A549 (cell line): ENCODE measurements at regions of chr11 and their contacts with region 1.

Region 1: GRCh38 chr11:13210424-13210823 is 67.2 kb upstream of the BMAL1 start:
- DNase-seq: peak; percentile 72 to 88
- ATAC-seq: peak; percentile 85 to 90
- H3K4me3 ChIP-seq: no peak overlapping the region
- H3K27ac ChIP-seq: peak overlapping the region; percentile 6 to 64; a peak in 3 of 6 replicates
- H3K4me1 ChIP-seq: peaks cover 35% of the 10 kb centered on the region
- CTCF ChIP-seq: peak; percentile 95
- EP300 ChIP-seq: no peak
- POLR2A ChIP-seq: no peak
- RAD21 ChIP-seq: peak; percentile 99

Region 2: GRCh38 chr11:13183094-13183825 is 27.2 kb before region 1 on chr11:
- CTCF ChIA-PET with region 1: interaction called, 23 read pairs
- POLR2A ChIA-PET with region 1: no interaction called
- DNase-seq: peak; percentile 48 to 53
- ATAC-seq: peak; percentile 85 to 92
- H3K4me3 ChIP-seq: peak overlapping the region; percentile 42
- H3K27ac ChIP-seq: peak overlapping the region; percentile 54 to 69; a peak in 5 of 6 replicates
- H3K4me1 ChIP-seq: peaks cover 6% of the 10 kb centered on the region
- CTCF ChIP-seq: peak; percentile 60
- EP300 ChIP-seq: no peak
- POLR2A ChIP-seq: no peak
- RAD21 ChIP-seq: peak; percentile 76 to 80

Region 3: GRCh38 chr11:13238879-13239514 is 28.6 kb after region 1 on chr11:
- CTCF ChIA-PET with region 1: interaction called, 77 read pairs
- POLR2A ChIA-PET with region 1: no interaction called
- DNase-seq: peak; percentile 55 to 57
- ATAC-seq: peak; percentile 59 to 95; a peak in 4 of 6 replicates
- H3K4me3 ChIP-seq: no peak overlapping the region
- H3K27ac ChIP-seq: peak overlapping the region in 1 of 2 experiments; percentile 14; a peak in 3 of 6 replicates
- H3K4me1 ChIP-seq: 0 out of 3 replicates have a peak, but pooled peaks cover 2% of the 10 kb centered on the region
- CTCF ChIP-seq: peak; percentile 77
- EP300 ChIP-seq: no peak
- POLR2A ChIP-seq: no peak
- RAD21 ChIP-seq: peak; percentile 71 to 78

Region 4: GRCh38 chr11:13261591-13262061 is 51.2 kb after region 1 on chr11:
- CTCF ChIA-PET with region 1: interaction called, 30 read pairs
- POLR2A ChIA-PET with region 1: interaction called, 7 read pairs
- DNase-seq: peak; percentile 69 to 84
- ATAC-seq: peak; percentile 78 to 95
- H3K4me3 ChIP-seq: no peak overlapping the region
- H3K27ac ChIP-seq: peak overlapping the region; percentile 62 to 84
- H3K4me1 ChIP-seq: peaks cover 30% of the 10 kb centered on the region
- CTCF ChIP-seq: no peak
- EP300 ChIP-seq: no peak
- POLR2A ChIP-seq: no peak
- RAD21 ChIP-seq: no peak

Region 5: DNA sequence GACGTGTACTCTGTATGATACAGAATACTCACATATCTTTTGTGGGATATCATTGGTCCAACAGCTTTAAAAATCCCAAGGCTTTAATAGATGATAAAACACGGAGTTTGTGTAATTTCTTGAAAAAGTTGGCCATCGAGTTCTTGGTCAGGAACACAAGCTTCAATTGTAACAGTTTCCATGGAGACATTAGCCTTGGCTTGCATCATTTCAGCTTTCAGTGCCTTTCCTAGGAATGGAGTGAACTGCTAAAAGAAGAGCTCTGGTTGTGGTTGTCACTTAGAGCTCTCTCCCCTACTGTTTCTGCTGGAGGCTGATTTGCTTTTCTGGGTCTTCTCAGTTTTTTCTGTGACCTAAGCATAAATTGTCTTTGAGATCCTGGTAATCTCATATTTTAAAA is 81.4 kb after region 1 on chr11:
- CTCF ChIA-PET with region 1: interaction called, 15 read pairs
- POLR2A ChIA-PET with region 1: no interaction called
- DNase-seq: no peak
- ATAC-seq: no peak
- H3K4me3 ChIP-seq: no peak overlapping the region
- H3K27ac ChIP-seq: no peak overlapping the region
- H3K4me1 ChIP-seq: peaks cover 27% of the 10 kb centered on the region
- CTCF ChIP-seq: no peak
- EP300 ChIP-seq: no peak
- POLR2A ChIP-seq: no peak
- RAD21 ChIP-seq: no peak

Region 6: GRCh38 chr11:13343931-13344717 is 133.7 kb after region 1 on chr11:
- CTCF ChIA-PET with region 1: interaction called, 320 read pairs
- POLR2A ChIA-PET with region 1: interaction called, 32 read pairs
- DNase-seq: peak; percentile 74 to 80
- ATAC-seq: peak; percentile 44 to 68
- H3K4me3 ChIP-seq: no peak overlapping the region
- H3K27ac ChIP-seq: peak overlapping the region; percentile 39 to 98
- H3K4me1 ChIP-seq: peaks cover 48% of the 10 kb centered on the region
- CTCF ChIP-seq: peak; percentile 91
- EP300 ChIP-seq: no peak
- POLR2A ChIP-seq: no peak
- RAD21 ChIP-seq: peak; percentile 92 to 95

Region 7: GRCh38 chr11:13384908-13385640 is 174.7 kb after region 1 on chr11:
- CTCF ChIA-PET with region 1: interaction called, 123 read pairs
- POLR2A ChIA-PET with region 1: no interaction called
- DNase-seq: peak; percentile 46 to 52
- ATAC-seq: peak; percentile 68 to 82; a peak in 5 of 6 replicates
- H3K4me3 ChIP-seq: no peak overlapping the region
- H3K27ac ChIP-seq: no peak overlapping the region
- H3K4me1 ChIP-seq: no peaks in the 10 kb centered on the region
- CTCF ChIP-seq: peak; percentile 82
- EP300 ChIP-seq: no peak
- POLR2A ChIP-seq: no peak
- RAD21 ChIP-seq: peak; percentile 67 to 69